ENCODE measurements at regions of chr12 and their contacts with region 1.

Region 1: DNA sequence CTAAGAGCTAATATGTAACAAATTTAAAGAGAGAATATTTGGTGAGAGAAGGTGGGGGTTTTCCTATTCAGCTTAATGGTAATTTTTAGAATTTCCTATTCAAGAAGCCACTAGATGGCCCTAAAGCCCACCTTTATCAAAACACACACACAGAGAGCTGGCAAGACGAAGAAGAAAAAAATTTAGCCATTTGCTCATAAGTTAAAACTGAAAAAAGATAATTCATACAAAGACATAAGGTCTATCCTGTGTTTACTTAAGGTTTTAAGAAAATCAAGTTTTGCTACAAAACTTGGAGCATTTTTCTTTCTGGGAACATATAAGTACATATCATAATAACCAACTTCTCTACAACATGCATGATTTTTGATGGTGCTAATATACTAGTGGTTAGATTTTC is 46.8 kb upstream of the PCED1B start:
- DNase-seq: peak in 12 of 35 experiments; percentile 4 to 79 (median 16)
- ATAC-seq: peak; percentile 74 to 85 (median 80)
- H3K4me3 ChIP-seq: no peak overlapping the region
- H3K4me3 Mint-ChIP-seq: peak overlapping the region in 1 of 3 donors; percentile 32
- H3K27ac ChIP-seq: no peak overlapping the region
- H3K27ac Mint-ChIP-seq: peak overlapping the region in 1 of 2 donors; percentile 49
- H3K4me1 ChIP-seq: peaks cover 0 to 2% of the 10 kb centered on the region in 2 experiments
- H3K4me1 Mint-ChIP-seq: peaks cover 26 to 28% (median 28%) of the 10 kb centered on the region in 3 donors
- H3K27me3 ChIP-seq: no peaks in the 10 kb centered on the region
- H3K27me3 Mint-ChIP-seq: no peaks in the 10 kb centered on the region

Region 2: DNA sequence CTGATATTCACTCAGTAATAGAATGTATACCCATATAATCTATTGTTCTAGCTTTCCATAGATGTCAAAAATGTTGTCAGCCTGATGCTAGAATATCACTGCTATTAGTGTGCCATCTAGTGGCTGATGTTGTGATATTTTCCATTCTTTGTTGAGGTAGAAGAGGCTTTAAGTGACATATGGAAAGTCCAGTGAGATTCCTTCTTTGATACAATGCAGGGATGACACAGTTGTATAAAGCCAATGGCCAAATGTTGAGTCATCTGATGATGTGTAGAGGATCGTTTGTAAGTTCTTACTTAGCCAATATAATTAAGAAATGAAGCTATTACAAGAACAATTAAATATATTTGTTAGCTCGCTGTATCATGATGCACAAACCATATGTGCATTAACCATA is 11.3 kb before region 1 on chr12:
- CTCF ChIA-PET with region 1: interaction called, 3 to 18 read pairs
- POLR2A ChIA-PET with region 1: interaction called in 1 of 2 experiments, 3 read pairs
- DNase-seq: peak in 3 of 35 experiments; percentile 3 to 71 (median 26)
- ATAC-seq: peak in 1 of 4 experiments; percentile 48
- H3K4me3 ChIP-seq: no peak overlapping the region
- H3K4me3 Mint-ChIP-seq: no peak overlapping the region
- H3K27ac ChIP-seq: no peak overlapping the region
- H3K27ac Mint-ChIP-seq: no peak overlapping the region
- H3K4me1 ChIP-seq: no peaks in the 10 kb centered on the region
- H3K4me1 Mint-ChIP-seq: no peaks in the 10 kb centered on the region
- H3K27me3 ChIP-seq: peaks cover 0 to 9% of the 10 kb centered on the region in 2 experiments
- H3K27me3 Mint-ChIP-seq: peaks cover 19 to 33% of the 10 kb centered on the region in 2 donors

Region 3: GRCh38 chr12:47190271-47190750 is 157.7 kb after region 1 on chr12:
- CTCF ChIA-PET with region 1: interaction called in 1 of 2 experiments, 16 read pairs
- POLR2A ChIA-PET with region 1: no interaction called
- DNase-seq: no peak
- ATAC-seq: no peak
- H3K4me3 ChIP-seq: no peak overlapping the region
- H3K4me3 Mint-ChIP-seq: peak overlapping the region in 2 of 3 donors; percentile 34 to 74
- H3K27ac ChIP-seq: peak overlapping the region; percentile 67
- H3K27ac Mint-ChIP-seq: peak overlapping the region; percentile 91 to 99
- H3K4me1 ChIP-seq: peaks cover 41 to 60% of the 10 kb centered on the region in 2 experiments
- H3K4me1 Mint-ChIP-seq: peaks cover 86 to 92% (median 90%) of the 10 kb centered on the region in 3 donors
- H3K27me3 ChIP-seq: no peaks in the 10 kb centered on the region
- H3K27me3 Mint-ChIP-seq: no peaks in the 10 kb centered on the region

Region 4: DNA sequence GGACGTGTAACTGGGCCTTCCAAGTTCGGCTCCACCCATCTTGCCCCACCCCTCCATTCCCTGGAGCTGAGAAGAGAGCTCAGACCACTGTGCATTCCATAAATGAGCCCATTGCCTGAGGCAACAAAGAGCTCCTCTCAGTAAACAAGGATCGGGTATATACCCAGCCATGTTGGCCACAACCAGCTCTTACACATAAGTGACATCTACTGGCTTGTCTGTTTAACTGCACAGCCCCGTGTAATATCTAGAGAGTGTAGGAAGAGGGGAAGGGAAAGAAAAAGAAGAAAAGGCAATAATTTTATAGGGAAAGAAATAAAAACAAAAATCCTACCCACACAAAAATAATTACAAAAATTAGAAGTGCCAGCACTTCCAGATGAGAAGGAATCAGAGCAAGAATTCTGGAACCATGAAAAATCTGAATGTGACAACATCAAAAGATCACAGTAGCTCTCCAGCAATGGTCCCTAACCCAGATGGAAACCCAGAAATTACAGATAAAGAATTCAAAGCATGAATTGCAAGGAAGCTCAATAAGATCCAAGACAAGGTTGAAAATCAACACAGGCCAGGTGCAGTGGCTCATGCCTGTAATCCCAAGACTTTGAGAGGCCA is 365.1 kb after region 1 on chr12:
- CTCF ChIA-PET with region 1: interaction called, 17 to 73 read pairs
- POLR2A ChIA-PET with region 1: no interaction called
- DNase-seq: peak in 21 of 35 experiments; percentile 22 to 73 (median 29)
- ATAC-seq: peak; percentile 88 to 90 (median 89)
- H3K4me3 ChIP-seq: no peak overlapping the region
- H3K4me3 Mint-ChIP-seq: peak overlapping the region; percentile 18 to 49 (median 36)
- H3K27ac ChIP-seq: peak overlapping the region; percentile 22
- H3K27ac Mint-ChIP-seq: peak overlapping the region; percentile 87 to 93
- H3K4me1 ChIP-seq: peaks cover 5 to 29% of the 10 kb centered on the region in 2 experiments
- H3K4me1 Mint-ChIP-seq: peaks cover 41 to 70% (median 49%) of the 10 kb centered on the region in 3 donors
- H3K27me3 ChIP-seq: no peaks in the 10 kb centered on the region
- H3K27me3 Mint-ChIP-seq: no peaks in the 10 kb centered on the region

Region 5: DNA sequence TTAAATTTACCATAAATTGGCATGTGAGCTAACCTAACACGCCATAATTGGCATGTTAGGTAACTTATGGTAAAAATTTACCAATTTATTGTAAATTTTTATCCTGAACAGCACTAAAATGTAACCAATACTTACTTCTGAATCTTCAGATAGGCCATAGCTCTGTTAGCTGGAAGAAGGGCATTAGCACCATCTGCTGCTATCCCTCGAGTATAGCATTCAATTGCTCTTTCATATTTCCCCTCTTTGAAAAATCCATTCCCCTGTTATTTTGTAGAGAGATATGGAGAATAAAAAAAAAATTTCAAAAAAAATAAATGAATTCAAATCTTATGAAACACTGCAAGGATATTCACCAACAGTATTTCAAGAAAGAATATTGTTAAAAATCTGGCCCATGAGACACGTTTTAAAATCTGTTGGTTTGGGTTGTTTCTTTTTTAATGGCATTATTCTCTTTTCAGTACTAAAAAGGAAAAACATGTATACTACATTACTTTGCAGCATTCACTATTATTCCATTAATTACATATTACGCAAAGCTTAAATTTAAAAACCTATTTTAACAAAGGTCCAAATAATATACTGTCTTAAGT is 654.1 kb after region 1 on chr12:
- CTCF ChIA-PET with region 1: interaction called, 8 to 54 read pairs
- POLR2A ChIA-PET with region 1: no interaction called
- DNase-seq: peak in 11 of 35 experiments; percentile 8 to 63 (median 19)
- ATAC-seq: peak in 2 of 4 experiments; percentile 57 to 69
- H3K4me3 ChIP-seq: no peak overlapping the region
- H3K4me3 Mint-ChIP-seq: no peak overlapping the region
- H3K27ac ChIP-seq: no peak overlapping the region
- H3K27ac Mint-ChIP-seq: no peak overlapping the region
- H3K4me1 ChIP-seq: peaks cover 0 to 3% of the 10 kb centered on the region in 2 experiments
- H3K4me1 Mint-ChIP-seq: peaks cover 4 to 9% (median 7%) of the 10 kb centered on the region in 3 donors
- H3K27me3 ChIP-seq: no peaks in the 10 kb centered on the region
- H3K27me3 Mint-ChIP-seq: no peaks in the 10 kb centered on the region